ENCODE measurements at regions of chr10 and their contacts with region 1.

Region 1: GRCh38 chr10:90893190-90893589 is 21.4 kb downstream of the RPP30 start:
- DNase-seq: no peak
- ATAC-seq: no peak
- H3K4me3 Mint-ChIP-seq: no peak overlapping the region
- H3K27ac Mint-ChIP-seq: no peak overlapping the region
- H3K4me1 Mint-ChIP-seq: peaks cover 20% of the 10 kb centered on the region
- H3K27me3 Mint-ChIP-seq: no peaks in the 10 kb centered on the region

Region 2: GRCh38 chr10:90862908-90863514 is 30.2 kb before region 1 on chr10:
- CTCF ChIA-PET with region 1: no interaction called
- DNase-seq: no peak
- ATAC-seq: no peak
- H3K4me3 Mint-ChIP-seq: no peak overlapping the region
- H3K27ac Mint-ChIP-seq: no peak overlapping the region
- H3K4me1 Mint-ChIP-seq: peaks cover 3% of the 10 kb centered on the region
- H3K27me3 Mint-ChIP-seq: peaks cover 81% of the 10 kb centered on the region

Region 3: GRCh38 chr10:90879062-90879461 is 14.1 kb before region 1 on chr10:
- CTCF ChIA-PET with region 1: interaction called, 10 read pairs
- DNase-seq: no peak
- ATAC-seq: no peak
- H3K4me3 Mint-ChIP-seq: no peak overlapping the region
- H3K27ac Mint-ChIP-seq: peak overlapping the region; percentile 58
- H3K4me1 Mint-ChIP-seq: peaks cover 29% of the 10 kb centered on the region
- H3K27me3 Mint-ChIP-seq: no peaks in the 10 kb centered on the region

Region 4: DNA sequence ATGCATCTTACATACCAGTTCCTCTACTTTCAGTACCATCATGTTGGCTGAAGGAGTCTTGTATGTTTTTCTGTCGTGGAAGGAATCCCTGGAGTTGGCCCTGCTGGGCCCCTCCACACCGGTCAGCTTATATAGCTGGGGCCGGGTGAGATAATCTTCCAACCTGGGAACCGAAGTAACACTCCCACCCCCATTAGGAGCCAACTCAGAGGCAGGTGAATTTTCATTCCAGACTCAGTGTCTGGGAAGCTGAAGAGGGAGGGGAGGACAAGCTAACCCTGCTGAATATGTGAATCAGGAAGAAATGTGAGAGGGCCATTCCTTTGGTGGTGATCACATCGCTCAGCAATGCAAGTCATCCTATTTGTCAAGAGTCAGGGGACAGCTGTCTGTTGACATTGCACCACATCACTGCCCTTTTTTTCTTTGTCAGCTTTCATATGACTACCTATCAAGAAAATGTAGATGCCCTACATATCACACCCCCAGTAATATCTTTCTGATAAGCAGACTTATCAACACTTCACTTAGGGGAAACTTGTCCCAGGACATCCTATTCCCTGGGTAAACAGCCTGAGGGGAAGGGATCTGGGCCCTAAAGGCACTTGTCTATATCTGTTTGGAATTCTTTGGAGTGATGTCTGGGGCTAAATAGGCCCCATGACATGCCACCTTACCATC is 27.9 kb after region 1 on chr10 and contains the start of gene ANKRD1:
- CTCF ChIA-PET with region 1: no interaction called
- DNase-seq: no peak
- ATAC-seq: no peak
- H3K4me3 Mint-ChIP-seq: no peak within 1 kb of the TSS
- H3K27ac Mint-ChIP-seq: no peak within 1 kb of the TSS
- H3K4me1 Mint-ChIP-seq: no peaks in the 10 kb centered on the region
- H3K27me3 Mint-ChIP-seq: peaks cover 66% of the 10 kb centered on the region
- total RNA-seq, gene ANKRD1: not detected

Measured in activated CD8-positive, alpha-beta memory T cell treated with anti-CD3 and anti-CD28 coated beads, Interleukin-2, amount 10 ng/mL, durations not matched to agents 7 days and 5 days (primary cell).